Right ventricle myocardium superior (tissue), 1 donor: ENCODE measurements at regions of chr19 and their contacts with region 1.

Region 1: GRCh38 chr19:11887611-11888531 is at the start of gene ZNF69:
- DNase-seq: peak; percentile 94
- ATAC-seq: peak; percentile 100
- total RNA-seq, gene ZNF69: 4.7 TPM

Region 2: DNA sequence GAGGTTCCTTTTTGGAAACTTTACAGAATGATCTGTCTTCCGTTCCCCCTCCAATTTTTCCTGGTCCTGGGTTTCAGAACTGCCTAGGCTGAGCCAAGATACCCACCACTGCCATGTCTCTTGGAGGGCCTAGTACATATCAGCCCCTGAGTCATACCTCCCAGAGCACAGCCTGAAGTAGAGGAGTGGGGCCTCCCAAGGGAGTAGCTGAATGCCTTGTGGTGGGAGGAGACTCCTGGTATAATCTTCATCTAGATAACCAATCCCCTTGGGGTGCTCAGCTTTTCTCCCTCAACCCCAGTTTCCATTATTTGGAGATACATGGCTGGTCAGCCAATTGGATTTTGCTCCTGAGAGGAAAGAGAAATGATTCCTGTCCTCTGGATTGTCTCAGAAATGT is 107.3 kb after region 1 on chr19:
- intact Hi-C with region 1: loop called (anchors 10 kb)
- DNase-seq: no peak
- ATAC-seq: no peak